A673 (cell line): ENCODE measurements at regions of chr1 and their contacts with region 1.

Region 1: GRCh38 chr1:76336931-76337371 is 262.4 kb downstream of the ST6GALNAC3 start:
- DNase-seq: peak; percentile 94
- H3K4me3 ChIP-seq: no peak overlapping the region
- H3K27ac ChIP-seq: no peak overlapping the region
- H3K4me1 ChIP-seq: peaks cover 15% of the 10 kb centered on the region
- H3K27me3 ChIP-seq: no peaks in the 10 kb centered on the region
- CTCF ChIP-seq: no peak

Region 2: GRCh38 chr1:75845576-75845975 is 491.4 kb before region 1 on chr1:
- CTCF ChIA-PET with region 1: no interaction called
- POLR2A ChIA-PET with region 1: no interaction called
- intact Hi-C with region 1: no loop called
- DNase-seq: no peak
- H3K4me3 ChIP-seq: no peak overlapping the region
- H3K27ac ChIP-seq: no peak overlapping the region
- H3K4me1 ChIP-seq: no peaks in the 10 kb centered on the region
- H3K27me3 ChIP-seq: no peaks in the 10 kb centered on the region
- CTCF ChIP-seq: no peak

Region 3: DNA sequence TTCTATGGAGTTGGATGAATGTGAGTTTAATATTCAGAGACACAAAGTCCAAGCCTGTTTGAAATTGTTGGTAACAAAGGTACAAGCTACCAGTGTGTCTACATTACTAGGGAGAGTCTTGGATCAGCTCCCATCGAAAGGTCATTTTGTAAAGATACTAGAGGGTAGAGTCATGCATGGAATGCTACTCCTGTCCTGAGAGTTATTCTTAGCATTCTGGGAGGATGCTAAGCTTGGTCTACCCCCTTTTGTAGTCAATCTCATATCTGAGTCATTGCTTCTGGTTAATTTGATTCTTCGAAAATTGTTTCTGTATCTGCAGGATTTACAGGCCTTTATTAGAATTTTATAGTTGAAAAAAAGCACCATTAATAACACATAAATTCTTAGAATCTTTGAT is 22.2 kb before region 1 on chr1:
- CTCF ChIA-PET with region 1: no interaction called
- POLR2A ChIA-PET with region 1: no interaction called
- intact Hi-C with region 1: no loop called
- DNase-seq: no peak
- H3K4me3 ChIP-seq: no peak overlapping the region
- H3K27ac ChIP-seq: no peak overlapping the region
- H3K4me1 ChIP-seq: no peaks in the 10 kb centered on the region
- H3K27me3 ChIP-seq: peaks cover 8% of the 10 kb centered on the region
- CTCF ChIP-seq: no peak

Region 4: GRCh38 chr1:76601465-76601864 is 264.5 kb after region 1 on chr1:
- CTCF ChIA-PET with region 1: no interaction called
- POLR2A ChIA-PET with region 1: no interaction called
- intact Hi-C with region 1: loop called (anchors 5 kb)
- DNase-seq: peak; percentile 68
- H3K4me3 ChIP-seq: no peak overlapping the region
- H3K27ac ChIP-seq: no peak overlapping the region
- H3K4me1 ChIP-seq: peaks cover 26% of the 10 kb centered on the region
- H3K27me3 ChIP-seq: no peaks in the 10 kb centered on the region
- CTCF ChIP-seq: no peak